ENCODE measurements at regions of chr6 and their contacts with region 1.

Region 1: DNA sequence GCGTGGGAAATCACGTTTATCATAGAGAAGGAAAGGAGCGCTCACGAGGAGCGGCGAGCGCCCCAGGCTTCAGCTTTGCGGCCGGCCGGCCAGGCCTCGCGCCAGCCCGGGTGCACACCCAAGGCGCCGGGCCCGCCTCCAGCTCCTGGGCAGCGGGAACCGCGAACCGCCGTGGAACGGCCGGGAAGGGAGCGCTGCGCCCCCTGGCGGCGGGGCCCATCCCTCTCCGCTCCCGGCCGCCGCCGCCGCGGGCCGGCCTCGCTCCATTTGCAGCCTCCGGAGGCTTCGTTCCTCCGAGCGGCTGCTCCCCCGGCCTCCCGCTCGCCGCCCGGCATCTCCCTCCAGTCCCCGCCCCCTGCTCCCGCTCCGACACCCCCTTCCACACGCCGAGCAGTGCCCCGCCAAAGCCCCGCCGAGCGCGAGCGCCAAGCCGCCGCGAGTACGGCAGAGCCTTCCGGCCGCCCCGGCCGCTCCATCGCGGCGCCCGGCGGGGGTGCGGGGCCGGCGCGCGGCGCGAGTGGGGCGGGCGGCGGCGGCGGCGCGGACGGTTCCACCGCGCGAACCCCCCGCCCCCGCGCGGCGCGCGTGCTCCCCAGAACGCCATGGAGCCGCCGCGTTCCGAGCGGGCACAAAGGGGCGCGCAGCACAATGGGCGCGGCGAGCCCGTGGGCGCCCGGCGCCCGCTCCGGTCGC is 956 bp downstream of the BEND3 start:
- DNase-seq: peak; percentile 70
- H3K4me3 Mint-ChIP-seq: peak overlapping the region; percentile 82
- H3K27ac Mint-ChIP-seq: peak overlapping the region; percentile 77
- H3K4me1 Mint-ChIP-seq: peaks cover 26% of the 10 kb centered on the region
- H3K27me3 Mint-ChIP-seq: peaks cover 18% of the 10 kb centered on the region

Region 2: DNA sequence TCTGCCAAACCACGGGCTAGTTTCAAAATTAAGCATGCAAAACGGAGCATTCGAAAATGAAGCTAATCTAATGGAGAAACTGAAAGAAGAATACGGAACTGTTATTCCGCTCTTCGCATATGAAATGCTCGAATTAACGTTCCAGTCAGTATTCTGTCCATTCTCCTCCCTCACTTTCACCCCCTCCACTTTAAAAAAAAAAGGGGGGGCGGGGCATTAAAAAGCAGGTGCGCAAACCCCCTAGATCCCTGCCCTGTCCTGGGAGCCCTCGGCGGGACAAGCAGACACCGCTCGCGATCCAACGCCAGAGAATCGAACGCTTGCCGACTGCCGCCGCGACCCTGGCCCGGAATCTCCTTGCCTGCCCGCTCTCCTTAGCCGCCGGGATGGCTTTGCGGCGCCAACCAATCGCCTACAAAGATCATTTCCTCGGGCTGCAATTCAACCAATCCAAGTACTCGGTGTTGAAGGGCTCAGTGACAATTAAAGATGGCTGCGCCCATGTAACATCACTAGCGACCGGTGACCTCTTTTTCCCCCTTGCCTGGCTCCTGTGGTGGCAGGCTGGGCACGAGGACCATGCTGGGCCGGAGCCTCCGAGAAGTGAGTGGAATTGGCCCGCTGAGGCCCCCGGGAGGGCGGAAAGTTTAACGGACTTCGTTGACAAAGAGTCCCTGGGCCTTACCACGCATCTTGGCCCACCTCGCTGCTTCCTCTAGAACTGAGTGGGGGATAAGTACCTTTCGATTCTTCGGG is 485.1 kb before region 1 on chr6 and contains the starts of genes QRSL1 and RTN4IP1:
- intact Hi-C with region 1: loop called (anchors 1 kb)
- DNase-seq: peak; percentile 84
- H3K4me3 Mint-ChIP-seq: peak within 1 kb of the TSS; percentile 95
- H3K27ac Mint-ChIP-seq: peak within 1 kb of the TSS; percentile 98
- H3K4me1 Mint-ChIP-seq: peaks cover 33% of the 10 kb centered on the region
- H3K27me3 Mint-ChIP-seq: no peaks in the 10 kb centered on the region
- total RNA-seq, gene QRSL1: 18.6 and 21.9 TPM in 2 replicates
- total RNA-seq, gene RTN4IP1: 6.4 and 6.8 TPM in 2 replicates

Region 3: GRCh38 chr6:106979427-106979884 is 134.9 kb before region 1 on chr6:
- intact Hi-C with region 1: loop called (anchors 1 kb)
- DNase-seq: peak; percentile 60
- H3K4me3 Mint-ChIP-seq: no peak overlapping the region
- H3K27ac Mint-ChIP-seq: no peak overlapping the region
- H3K4me1 Mint-ChIP-seq: no peaks in the 10 kb centered on the region
- H3K27me3 Mint-ChIP-seq: peaks cover 30% of the 10 kb centered on the region

Region 4: DNA sequence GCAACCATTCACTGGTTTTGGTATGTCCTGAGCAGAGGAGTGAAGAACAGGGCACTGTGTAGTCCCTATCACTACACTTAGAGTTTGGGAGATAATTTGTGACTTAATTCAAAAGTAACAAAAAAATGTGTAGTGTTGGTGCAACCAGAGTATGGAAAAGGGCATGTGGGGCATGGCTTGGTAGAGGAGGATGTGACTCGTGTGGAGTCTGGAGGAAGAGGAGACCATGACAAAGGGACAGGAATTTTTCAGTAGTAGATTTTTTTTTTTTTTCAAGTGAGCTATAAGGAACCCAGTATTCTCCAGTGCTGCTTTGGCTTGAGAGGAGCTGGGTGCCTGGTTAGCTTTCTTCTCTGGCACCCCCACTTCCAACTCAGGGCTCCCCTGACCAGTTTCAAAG is 81.2 kb before region 1 on chr6:
- intact Hi-C with region 1: loop called (anchors 1 kb)
- DNase-seq: no peak
- H3K4me3 Mint-ChIP-seq: no peak overlapping the region
- H3K27ac Mint-ChIP-seq: peak overlapping the region; percentile 25
- H3K4me1 Mint-ChIP-seq: peaks cover 20% of the 10 kb centered on the region
- H3K27me3 Mint-ChIP-seq: no peaks in the 10 kb centered on the region

Region 5: DNA sequence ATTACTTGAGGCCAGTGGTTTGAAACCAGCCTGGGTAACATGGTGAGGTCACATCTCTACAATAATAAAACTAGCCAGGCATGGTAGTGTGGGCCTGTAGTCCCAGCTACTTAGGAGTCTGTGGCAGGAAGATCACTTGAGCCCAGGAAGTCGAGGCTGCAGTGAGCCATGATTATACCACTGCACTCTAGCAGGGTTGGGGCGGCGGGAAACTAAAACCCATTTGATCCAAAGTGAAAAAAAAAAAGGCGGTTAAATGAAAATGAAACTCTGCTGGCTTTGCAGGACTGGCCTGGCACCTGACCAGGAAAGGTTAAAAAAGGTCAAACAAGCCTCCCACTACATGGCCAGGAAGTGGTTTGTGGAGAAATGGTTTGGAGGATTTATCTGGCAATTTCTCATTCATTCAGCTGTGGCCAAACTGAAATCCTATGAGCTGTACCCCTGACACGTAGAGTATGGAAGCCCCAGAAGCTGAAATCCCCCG is 49.7 kb before region 1 on chr6:
- intact Hi-C with region 1: loop called (anchors 2 kb)
- DNase-seq: peak; percentile 4
- H3K4me3 Mint-ChIP-seq: no peak overlapping the region
- H3K27ac Mint-ChIP-seq: peak overlapping the region; percentile 44
- H3K4me1 Mint-ChIP-seq: peaks cover 36% of the 10 kb centered on the region
- H3K27me3 Mint-ChIP-seq: no peaks in the 10 kb centered on the region

Region 6: GRCh38 chr6:107144014-107144413 is 29.7 kb after region 1 on chr6:
- intact Hi-C with region 1: no loop called
- DNase-seq: no peak
- H3K4me3 Mint-ChIP-seq: no peak overlapping the region
- H3K27ac Mint-ChIP-seq: no peak overlapping the region
- H3K4me1 Mint-ChIP-seq: no peaks in the 10 kb centered on the region
- H3K27me3 Mint-ChIP-seq: no peaks in the 10 kb centered on the region

Region 7: DNA sequence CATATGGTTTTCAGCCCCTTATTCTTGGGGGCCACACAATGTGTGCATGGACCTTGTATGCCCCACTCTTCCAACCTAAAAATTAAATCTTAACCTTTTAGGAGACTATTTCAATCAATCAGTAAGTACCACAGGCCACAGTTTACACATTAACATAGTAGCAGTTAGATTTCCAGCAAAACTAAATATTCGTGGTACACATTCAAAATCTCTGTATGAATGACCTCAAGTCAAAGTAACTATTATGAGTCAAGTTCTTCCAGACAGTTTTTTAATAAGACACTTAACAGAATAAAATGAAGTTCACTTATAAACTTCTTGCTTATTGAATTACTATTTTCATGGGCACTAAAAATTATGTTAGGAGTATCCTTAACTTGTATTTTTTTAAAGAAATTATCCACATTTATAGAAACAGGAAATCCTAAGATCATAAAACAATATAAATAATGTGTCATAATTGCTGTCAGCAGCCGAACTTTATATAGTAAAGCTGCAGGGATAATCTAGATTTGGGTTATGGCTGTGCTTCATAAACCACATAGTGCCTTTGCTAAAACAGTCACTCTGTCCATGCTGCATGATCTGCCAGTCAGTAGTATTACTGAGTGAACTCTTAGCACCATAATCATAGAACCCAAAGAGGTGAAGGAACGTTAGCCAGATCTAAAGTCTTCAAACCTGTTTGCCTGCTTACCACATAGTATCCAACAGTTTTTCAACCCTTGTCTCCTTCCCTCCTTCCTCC is 822.0 kb after region 1 on chr6:
- intact Hi-C with region 1: no loop called
- DNase-seq: no peak
- H3K4me3 Mint-ChIP-seq: no peak overlapping the region
- H3K27ac Mint-ChIP-seq: no peak overlapping the region
- H3K4me1 Mint-ChIP-seq: peaks cover 7% of the 10 kb centered on the region
- H3K27me3 Mint-ChIP-seq: no peaks in the 10 kb centered on the region

Measured in activated T-helper 1 cell treated with anti-CD3 and anti-CD28 coated beads, Interleukin-12 subunit alpha, Interleukin-12 subunit beta, Interleukin-2, Interleukin-4 antibody, amounts not matched to agents 30 ng/mL and 10 ng/mL and 1 ng/mL, durations not matched to agents 14 hours and 24 hours and 36 hours (primary cell).